ENCODE measurements at regions of chr3 and their contacts with region 1.

Region 1: DNA sequence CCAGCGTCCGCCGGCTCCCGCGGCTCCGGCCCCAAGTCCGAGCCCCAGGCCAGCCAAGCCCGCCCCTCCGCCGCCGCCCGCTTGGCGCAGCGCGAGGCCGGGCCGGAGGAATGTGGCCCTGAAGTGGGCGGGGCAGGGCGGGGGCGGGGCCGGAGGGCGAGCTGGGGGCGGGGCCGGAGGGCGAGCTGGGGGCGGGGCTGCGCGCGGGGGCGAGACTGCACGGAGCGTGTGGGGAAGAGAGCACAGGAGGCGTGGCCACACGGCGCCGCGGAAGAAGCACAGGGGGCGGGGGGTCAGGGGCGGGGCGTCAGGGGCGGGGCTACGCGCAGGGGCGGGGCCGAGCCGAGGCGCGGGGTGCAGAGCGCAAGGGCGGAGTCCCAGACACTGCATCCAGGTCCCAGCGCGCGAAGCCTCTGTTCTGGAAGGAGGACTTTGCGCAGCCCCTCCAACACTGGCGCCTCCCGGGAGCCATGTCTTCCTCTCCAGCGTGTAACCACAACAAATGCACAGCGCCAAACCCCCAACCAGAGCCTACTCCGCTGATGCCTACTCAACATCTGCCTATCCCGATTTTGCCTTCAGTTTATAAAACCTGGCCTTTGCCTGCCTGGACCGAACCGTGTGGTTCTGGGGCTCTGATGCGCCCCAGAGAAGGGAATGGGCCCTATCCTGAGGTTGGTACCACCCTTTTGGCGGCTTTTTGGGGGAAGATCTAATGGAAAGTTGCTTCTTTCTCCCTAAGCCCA is 105.5 kb downstream of the IQSEC1 start:
- DNase-seq: peak; percentile 88
- ATAC-seq: peak; percentile 74
- H3K4me3 ChIP-seq: peak overlapping the region; percentile 94 to 95 (median 95)
- H3K27ac ChIP-seq: peak overlapping the region; percentile 86
- H3K4me1 ChIP-seq: peaks cover 70% of the 10 kb centered on the region
- H3K27me3 ChIP-seq: peaks cover 0 to 3% of the 10 kb centered on the region in 2 experiments; a peak in 1 of 5 replicates
- CTCF ChIP-seq: no peak
- EP300 ChIP-seq: peak in 1 of 2 experiments; percentile 15; a peak in 1 of 4 replicates
- POLR2A ChIP-seq: peak; percentile 67 to 84
- RAD21 ChIP-seq: 0 out of 2 replicates have a peak, but pooled peaks have one; percentile 6

Region 2: GRCh38 chr3:12345141-12345561 is 622.6 kb before region 1 on chr3:
- CTCF ChIA-PET with region 1: no interaction called
- POLR2A ChIA-PET with region 1: no interaction called
- in situ Hi-C with region 1: no loop called
- intact Hi-C with region 1: no loop called
- DNase-seq: no peak
- ATAC-seq: no peak
- H3K4me3 ChIP-seq: no peak overlapping the region
- H3K27ac ChIP-seq: no peak overlapping the region
- H3K4me1 ChIP-seq: no peaks in the 10 kb centered on the region
- H3K27me3 ChIP-seq: no peaks in the 10 kb centered on the region
- CTCF ChIP-seq: no peak
- EP300 ChIP-seq: no peak
- POLR2A ChIP-seq: no peak
- RAD21 ChIP-seq: no peak

Region 3: DNA sequence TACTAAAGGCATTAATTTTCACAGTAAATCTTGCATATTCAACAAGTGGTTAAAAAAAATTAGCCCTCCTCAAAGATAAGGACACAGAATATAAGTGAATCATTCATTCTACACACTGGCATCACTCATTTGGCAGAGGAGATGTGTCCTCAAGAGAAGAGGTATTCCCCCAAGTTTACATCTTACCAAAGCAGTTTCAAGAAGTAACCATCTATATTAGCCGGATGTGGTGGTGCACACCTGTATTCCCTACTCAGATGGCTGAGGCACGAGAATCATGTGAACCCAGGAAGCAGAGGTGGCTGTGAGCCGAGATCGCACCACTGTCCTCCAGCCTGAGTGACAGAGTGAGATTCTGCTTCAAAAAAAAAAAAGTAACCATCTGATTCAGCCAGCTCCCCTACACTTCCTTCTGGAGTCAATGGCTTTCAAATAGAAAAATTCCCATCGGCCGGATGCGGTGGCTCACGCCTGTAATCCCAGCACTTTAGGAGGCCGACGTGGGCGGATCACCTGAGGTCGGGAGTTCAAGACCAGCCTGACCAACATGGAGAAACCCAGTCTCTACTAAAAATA is 319.3 kb before region 1 on chr3:
- CTCF ChIA-PET with region 1: no interaction called
- POLR2A ChIA-PET with region 1: no interaction called
- in situ Hi-C with region 1: no loop called
- intact Hi-C with region 1: no loop called
- DNase-seq: no peak
- ATAC-seq: no peak
- H3K4me3 ChIP-seq: peak overlapping the region in 2 of 3 experiments; percentile 22 to 28; a peak in 2 of 6 replicates
- H3K27ac ChIP-seq: peak overlapping the region; percentile 90
- H3K4me1 ChIP-seq: peaks cover 89% of the 10 kb centered on the region
- H3K27me3 ChIP-seq: no peaks in the 10 kb centered on the region
- CTCF ChIP-seq: no peak
- EP300 ChIP-seq: no peak
- POLR2A ChIP-seq: no peak
- RAD21 ChIP-seq: no peak

Region 4: DNA sequence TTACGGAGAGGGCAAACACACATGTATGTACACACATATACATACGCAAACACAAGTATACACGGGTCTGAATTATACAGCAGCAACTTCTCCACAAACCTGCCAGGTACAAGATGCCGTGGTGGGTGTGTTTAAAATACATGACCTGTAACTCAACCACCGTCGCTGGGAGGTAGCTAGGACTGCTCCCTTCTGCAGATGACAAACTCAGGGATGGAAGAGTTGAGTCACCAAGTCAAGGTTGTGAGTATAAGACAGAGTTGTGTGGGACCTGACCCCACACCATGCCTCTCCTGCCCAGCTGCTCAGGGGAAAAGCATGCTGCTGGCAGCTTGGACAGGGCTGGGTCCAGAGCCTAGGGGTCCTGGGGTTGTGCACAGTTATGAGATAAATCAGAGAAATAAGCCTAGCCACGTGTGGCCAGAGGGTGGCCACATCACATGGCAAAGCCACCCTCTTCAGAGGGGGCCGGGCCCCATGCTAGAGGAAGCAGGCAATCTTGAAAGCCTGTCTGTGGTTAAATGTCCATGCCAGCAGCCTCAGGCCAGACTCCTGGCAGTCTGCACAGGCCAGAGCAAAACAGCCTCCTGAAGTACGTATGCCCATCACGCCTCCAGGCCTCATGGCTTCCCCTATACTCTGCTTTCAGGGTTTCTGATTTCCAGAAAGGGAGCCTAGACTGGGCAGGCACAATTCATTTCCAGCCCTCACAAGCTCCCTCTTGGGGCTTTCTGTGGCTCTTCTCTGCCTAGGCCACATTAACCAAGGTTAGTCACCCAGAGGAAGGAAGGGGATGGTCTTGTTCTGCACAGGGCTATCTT is 18.7 kb before region 1 on chr3:
- CTCF ChIA-PET with region 1: no interaction called
- POLR2A ChIA-PET with region 1: interaction called, 16 read pairs
- in situ Hi-C with region 1: no loop called
- intact Hi-C with region 1: no loop called
- DNase-seq: no peak
- ATAC-seq: no peak; the same call in 2 of the 3 replicates
- H3K4me3 ChIP-seq: no peak overlapping the region
- H3K27ac ChIP-seq: no peak overlapping the region
- H3K4me1 ChIP-seq: peaks cover 22% of the 10 kb centered on the region
- H3K27me3 ChIP-seq: no peaks in the 10 kb centered on the region
- CTCF ChIP-seq: no peak
- EP300 ChIP-seq: no peak
- POLR2A ChIP-seq: no peak
- RAD21 ChIP-seq: no peak

Region 5: DNA sequence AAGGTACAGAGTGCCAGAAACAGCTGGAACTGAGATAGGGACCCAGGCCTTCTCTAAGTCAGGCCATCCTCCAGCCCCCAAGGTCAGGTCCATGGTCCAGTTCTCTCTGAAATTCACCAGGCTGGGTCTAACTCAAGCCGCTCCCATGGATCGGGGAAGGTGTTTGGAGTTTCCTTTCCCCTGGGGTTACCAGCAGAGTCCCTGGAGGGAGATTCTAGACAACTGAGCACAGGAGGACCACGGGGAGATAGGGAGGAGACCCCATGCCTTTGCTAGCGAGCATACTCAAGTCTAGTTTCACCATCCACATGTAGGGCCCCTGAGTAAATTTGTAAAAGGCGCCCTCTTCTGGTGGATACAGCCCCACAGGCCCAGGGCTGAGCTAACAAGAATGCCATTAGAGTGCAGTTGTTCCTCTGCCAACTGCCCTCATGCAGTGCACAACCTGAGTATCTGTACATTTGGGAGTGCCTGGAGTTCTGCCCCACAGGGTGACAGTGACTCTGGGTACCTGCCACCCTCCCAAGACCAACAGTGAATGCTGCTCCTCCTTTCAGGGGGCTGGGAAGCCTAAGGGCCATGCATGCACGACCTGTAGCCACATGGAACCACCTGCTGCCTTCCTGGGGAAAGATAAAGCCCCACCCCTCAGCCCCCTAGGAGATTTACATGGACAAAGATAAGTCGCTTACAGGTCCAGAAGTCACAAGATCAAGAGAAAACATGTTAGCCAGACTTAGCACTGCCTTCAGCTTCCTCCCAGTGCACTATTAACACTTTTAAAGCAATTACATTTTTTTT is 16.4 kb after region 1 on chr3:
- CTCF ChIA-PET with region 1: no interaction called
- POLR2A ChIA-PET with region 1: interaction called, 10 read pairs
- in situ Hi-C with region 1: no loop called
- intact Hi-C with region 1: loop called (anchors 1 kb)
- DNase-seq: peak; percentile 79
- ATAC-seq: peak; percentile 96
- H3K4me3 ChIP-seq: peak overlapping the region in 2 of 3 experiments; percentile 29 to 37; a peak in 4 of 6 replicates
- H3K27ac ChIP-seq: peak overlapping the region; percentile 31
- H3K4me1 ChIP-seq: peaks cover 15% of the 10 kb centered on the region
- H3K27me3 ChIP-seq: no peaks in the 10 kb centered on the region
- CTCF ChIP-seq: peak; percentile 94
- EP300 ChIP-seq: no peak
- POLR2A ChIP-seq: no peak
- RAD21 ChIP-seq: peak; percentile 90

Region 6: GRCh38 chr3:12994607-12995388 is 27.0 kb after region 1 on chr3:
- CTCF ChIA-PET with region 1: no interaction called
- POLR2A ChIA-PET with region 1: interaction called, 29 read pairs
- in situ Hi-C with region 1: no loop called
- intact Hi-C with region 1: loop called (anchors 2 kb)
- DNase-seq: peak; percentile 70
- ATAC-seq: peak; percentile 75
- H3K4me3 ChIP-seq: peak overlapping the region; percentile 72 to 86 (median 81)
- H3K27ac ChIP-seq: peak overlapping the region; percentile 42
- H3K4me1 ChIP-seq: peaks cover 57% of the 10 kb centered on the region
- H3K27me3 ChIP-seq: no peaks in the 10 kb centered on the region
- CTCF ChIP-seq: peak; percentile 94
- EP300 ChIP-seq: no peak
- POLR2A ChIP-seq: peak in 1 of 2 experiments; percentile 33; a peak in 1 of 4 replicates
- RAD21 ChIP-seq: peak; percentile 94

Region 7: DNA sequence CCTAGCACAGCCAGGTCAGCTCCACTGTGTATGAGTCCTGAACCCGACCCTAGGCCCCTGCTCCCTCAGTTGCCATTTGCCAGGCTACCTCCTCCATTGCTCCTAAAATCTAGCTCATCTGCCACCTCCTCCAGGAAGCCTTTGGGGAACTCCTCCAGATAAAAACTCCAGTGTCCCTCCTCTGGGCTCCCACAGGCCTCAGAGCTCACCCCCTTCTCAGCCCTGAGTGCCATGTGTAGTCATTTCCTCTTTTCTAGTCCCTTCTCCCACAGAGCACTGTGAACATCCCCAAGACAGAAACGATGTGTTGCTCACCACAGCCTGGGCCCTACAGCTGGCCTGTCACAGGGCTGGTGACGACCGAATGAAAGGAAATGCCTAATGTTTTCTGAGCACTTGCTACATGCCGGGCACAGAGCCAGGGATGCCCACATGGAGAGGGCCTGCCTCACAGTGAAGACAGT is 44.5 kb after region 1 on chr3:
- CTCF ChIA-PET with region 1: no interaction called
- POLR2A ChIA-PET with region 1: no interaction called
- in situ Hi-C with region 1: no loop called
- intact Hi-C with region 1: no loop called
- DNase-seq: no peak
- ATAC-seq: no peak
- H3K4me3 ChIP-seq: no peak overlapping the region
- H3K27ac ChIP-seq: no peak overlapping the region
- H3K4me1 ChIP-seq: peaks cover 8% of the 10 kb centered on the region
- H3K27me3 ChIP-seq: no peaks in the 10 kb centered on the region
- CTCF ChIP-seq: no peak
- EP300 ChIP-seq: no peak
- POLR2A ChIP-seq: no peak
- RAD21 ChIP-seq: no peak

Region 8: DNA sequence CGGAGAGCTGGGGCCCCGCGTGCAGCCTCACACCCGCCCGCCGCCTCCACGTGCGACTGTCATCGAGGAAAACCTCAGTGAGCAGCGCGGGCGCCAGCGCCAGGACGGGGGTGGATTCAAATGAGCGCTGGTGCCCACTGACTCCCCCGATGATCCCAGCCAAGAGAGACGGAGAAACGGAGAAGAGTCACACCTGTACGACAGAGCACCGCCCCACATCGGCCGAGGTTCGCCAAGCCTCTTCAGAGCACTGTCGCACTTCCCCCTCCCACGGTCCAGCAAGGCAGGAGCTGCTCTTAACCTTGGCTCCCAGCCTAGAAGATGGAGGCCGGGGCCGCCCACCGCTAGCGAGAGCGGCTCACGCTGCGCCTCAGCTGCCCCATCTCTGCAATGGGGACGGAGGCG is 236.4 kb after region 1 on chr3:
- CTCF ChIA-PET with region 1: no interaction called
- POLR2A ChIA-PET with region 1: no interaction called
- in situ Hi-C with region 1: no loop called
- intact Hi-C with region 1: no loop called
- DNase-seq: no peak
- ATAC-seq: no peak
- H3K4me3 ChIP-seq: no peak overlapping the region
- H3K27ac ChIP-seq: no peak overlapping the region
- H3K4me1 ChIP-seq: no peaks in the 10 kb centered on the region
- H3K27me3 ChIP-seq: no peaks in the 10 kb centered on the region
- CTCF ChIP-seq: no peak
- EP300 ChIP-seq: no peak
- POLR2A ChIP-seq: no peak
- RAD21 ChIP-seq: no peak

Region 9: DNA sequence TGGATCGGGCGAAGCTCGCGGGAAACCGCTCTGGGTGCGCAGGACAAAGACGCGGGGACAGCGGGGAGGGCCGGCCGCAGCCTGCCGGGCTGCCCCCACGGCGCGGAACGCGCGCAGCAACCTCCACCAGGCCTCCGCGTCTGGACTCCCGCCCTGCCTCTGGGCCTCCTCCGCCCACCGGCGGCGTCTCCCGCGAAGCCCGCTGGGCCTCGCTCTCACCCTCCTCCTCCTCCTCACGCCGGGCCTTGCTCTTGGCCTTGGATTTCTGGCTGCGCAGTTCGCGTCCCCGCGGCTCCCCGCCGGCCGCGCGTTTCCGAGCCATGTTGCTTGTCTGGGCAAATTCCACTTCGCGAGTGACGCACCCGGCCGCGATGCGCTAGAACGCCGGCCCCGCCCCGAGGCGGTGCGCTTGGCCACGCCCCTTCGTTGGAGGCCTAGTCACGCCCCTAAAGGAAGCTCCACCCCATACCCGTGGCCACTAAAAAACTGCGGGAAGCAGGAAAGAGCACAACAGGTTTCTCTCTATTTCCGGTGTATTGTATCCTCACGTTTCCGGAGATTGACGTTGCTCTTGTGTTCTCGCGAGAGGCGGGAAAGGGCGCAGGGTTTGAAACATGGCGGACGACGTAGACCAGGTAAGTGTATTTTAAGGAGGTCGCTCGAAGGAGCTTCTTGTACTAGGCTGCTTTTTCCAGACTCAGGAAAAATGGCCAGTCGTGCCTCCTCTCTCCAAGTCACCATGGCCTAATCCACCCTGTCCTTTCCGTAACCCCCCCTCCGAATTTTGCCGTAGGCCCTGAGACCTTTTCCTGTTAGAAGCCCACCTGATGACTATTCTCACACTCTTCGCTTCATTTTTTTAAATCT is 1210.7 kb after region 1 on chr3 and contains the starts of genes LSM3 and XPC:
- CTCF ChIA-PET with region 1: no interaction called
- POLR2A ChIA-PET with region 1: no interaction called
- in situ Hi-C with region 1: no loop called
- intact Hi-C with region 1: loop called (anchors 5 kb)
- DNase-seq: peak; percentile 98
- ATAC-seq: peak; percentile 96
- H3K4me3 ChIP-seq: peak within 1 kb of the TSS; percentile 88 to 95 (median 95)
- H3K27ac ChIP-seq: peak within 1 kb of the TSS; percentile 91
- H3K4me1 ChIP-seq: peaks cover 67% of the 10 kb centered on the region
- H3K27me3 ChIP-seq: no peaks in the 10 kb centered on the region; a peak in 1 of 5 replicates
- CTCF ChIP-seq: no peak
- EP300 ChIP-seq: no peak; a peak in 1 of 4 replicates
- POLR2A ChIP-seq: peak; percentile 83 to 91
- RAD21 ChIP-seq: peak; percentile 17; the same call in 1 of the 2 replicates
- total RNA-seq, gene LSM3: 19.4 and 28.7 TPM in 2 replicates
- total RNA-seq, gene XPC: 19.2 and 24.1 TPM in 2 replicates

Measured in HepG2 (cell line).